ENCODE measurements at regions of chr2 and their contacts with region 1.

Region 1: DNA sequence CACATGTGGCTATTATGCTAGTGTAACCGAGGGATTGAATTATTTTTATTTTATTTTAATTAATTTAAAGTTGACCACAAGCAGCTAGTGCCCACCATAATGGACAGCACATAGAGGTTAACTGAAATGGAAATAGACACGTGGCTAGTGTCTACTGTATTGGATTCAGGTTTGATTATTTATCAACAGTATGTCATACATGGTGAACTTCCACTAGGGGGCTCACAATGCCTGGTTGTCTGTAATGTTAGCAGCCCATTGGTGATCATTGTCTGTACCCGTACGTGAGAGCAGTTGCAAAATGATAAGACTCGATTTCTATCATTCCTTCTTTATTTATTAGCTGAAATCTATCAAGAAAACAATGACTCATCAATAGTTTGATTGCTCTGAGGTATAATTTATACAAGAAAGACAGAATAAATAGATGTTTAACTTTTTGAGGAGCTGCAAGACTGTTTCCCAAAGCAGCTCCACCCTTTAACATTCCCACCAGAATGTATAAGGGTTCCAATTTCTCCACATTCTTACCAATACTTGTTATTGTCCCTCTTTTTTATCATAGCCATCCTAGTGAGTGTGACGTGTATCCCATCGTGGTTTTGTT is 76.5 kb downstream of the CYBRD1 start:
- DNase-seq: peak in 8 of 9 experiments; percentile 9 to 75 (median 48)
- ATAC-seq: peak; percentile 95
- H3K4me3 ChIP-seq: no peak overlapping the region
- H3K4me3 Mint-ChIP-seq: no peak overlapping the region
- H3K27ac ChIP-seq: no peak overlapping the region
- H3K27ac Mint-ChIP-seq: no peak overlapping the region
- H3K4me1 ChIP-seq: peaks cover 4% of the 10 kb centered on the region
- H3K4me1 Mint-ChIP-seq: peaks cover 4% of the 10 kb centered on the region
- H3K27me3 ChIP-seq: no peaks in the 10 kb centered on the region
- H3K27me3 Mint-ChIP-seq: peaks cover 4% of the 10 kb centered on the region
- CTCF ChIP-seq: peak; percentile 82

Region 2: GRCh38 chr2:171566099-171566498 is 32.7 kb before region 1 on chr2:
- CTCF ChIA-PET with region 1: no interaction called
- POLR2A ChIA-PET with region 1: no interaction called
- intact Hi-C with region 1: no loop called
- DNase-seq: no peak
- ATAC-seq: no peak
- H3K4me3 ChIP-seq: no peak overlapping the region
- H3K4me3 Mint-ChIP-seq: no peak overlapping the region
- H3K27ac ChIP-seq: no peak overlapping the region
- H3K27ac Mint-ChIP-seq: no peak overlapping the region
- H3K4me1 ChIP-seq: no peaks in the 10 kb centered on the region
- H3K4me1 Mint-ChIP-seq: no peaks in the 10 kb centered on the region
- H3K27me3 ChIP-seq: no peaks in the 10 kb centered on the region
- H3K27me3 Mint-ChIP-seq: no peaks in the 10 kb centered on the region
- CTCF ChIP-seq: no peak

Region 3: GRCh38 chr2:171587567-171587966 is 11.2 kb before region 1 on chr2:
- CTCF ChIA-PET with region 1: interaction called, 22 read pairs
- POLR2A ChIA-PET with region 1: no interaction called
- intact Hi-C with region 1: no loop called
- DNase-seq: no peak
- ATAC-seq: no peak
- H3K4me3 ChIP-seq: no peak overlapping the region
- H3K4me3 Mint-ChIP-seq: no peak overlapping the region
- H3K27ac ChIP-seq: no peak overlapping the region
- H3K27ac Mint-ChIP-seq: no peak overlapping the region
- H3K4me1 ChIP-seq: no peaks in the 10 kb centered on the region
- H3K4me1 Mint-ChIP-seq: no peaks in the 10 kb centered on the region
- H3K27me3 ChIP-seq: peaks cover 0 to 6% of the 10 kb centered on the region in 2 experiments
- H3K27me3 Mint-ChIP-seq: peaks cover 3% of the 10 kb centered on the region
- CTCF ChIP-seq: no peak

Region 4: DNA sequence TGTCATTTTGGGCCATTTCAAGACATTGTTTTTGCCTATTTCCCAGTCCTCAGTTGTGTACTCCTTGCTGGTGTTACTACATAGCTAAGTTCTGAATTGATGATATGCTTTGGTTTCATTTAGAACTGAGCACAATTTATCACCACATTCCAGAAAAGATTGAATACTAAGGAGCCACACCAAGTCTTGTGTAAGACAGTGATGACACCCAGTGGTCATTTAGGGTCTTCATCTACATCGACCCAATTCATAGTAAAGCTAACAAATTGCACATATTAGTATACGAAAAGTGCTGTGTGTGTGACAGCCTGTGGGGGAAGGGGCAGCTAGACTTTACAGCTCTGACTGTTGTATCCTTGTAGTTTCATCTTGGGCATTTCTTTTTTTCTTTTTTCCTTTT is 514.8 kb after region 1 on chr2:
- CTCF ChIA-PET with region 1: interaction called, 8 read pairs
- POLR2A ChIA-PET with region 1: no interaction called
- intact Hi-C with region 1: loop called (anchors 1 to 5 kb)
- DNase-seq: peak in 1 of 9 experiments; percentile 46
- ATAC-seq: no peak
- H3K4me3 ChIP-seq: no peak overlapping the region
- H3K4me3 Mint-ChIP-seq: no peak overlapping the region
- H3K27ac ChIP-seq: no peak overlapping the region
- H3K27ac Mint-ChIP-seq: no peak overlapping the region
- H3K4me1 ChIP-seq: no peaks in the 10 kb centered on the region
- H3K4me1 Mint-ChIP-seq: no peaks in the 10 kb centered on the region
- H3K27me3 ChIP-seq: peaks cover 0 to 3% of the 10 kb centered on the region in 2 experiments
- H3K27me3 Mint-ChIP-seq: peaks cover 34% of the 10 kb centered on the region
- CTCF ChIP-seq: no peak